ENCODE measurements at regions of chr4 and their contacts with region 1.

Region 1: DNA sequence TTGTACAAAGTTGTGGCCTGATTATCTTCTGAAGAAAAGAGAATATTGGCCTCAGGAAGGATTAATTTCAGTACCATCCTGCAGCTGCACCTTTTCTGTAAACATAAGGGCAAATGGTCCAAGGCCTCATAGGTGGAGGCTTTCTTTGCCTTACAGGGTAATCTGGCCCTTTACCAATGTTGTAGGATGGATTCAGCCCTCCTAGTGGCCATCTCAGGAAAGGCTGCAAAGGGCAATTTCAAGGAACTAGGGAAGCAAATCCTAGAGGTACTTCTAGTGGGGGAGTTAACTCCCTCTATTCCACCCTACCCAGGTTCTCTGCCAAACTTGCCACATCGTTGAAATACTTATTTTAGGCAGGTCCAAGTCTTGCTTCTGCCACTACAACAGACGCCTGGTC is 57.6 kb downstream of the UGT2B11 start:
- DNase-seq: no peak

Region 2: GRCh38 chr4:68773699-68774098 is 383.2 kb before region 1 on chr4:
- intact Hi-C with region 1: loop called in 1 of 2 experiments (anchors 5 kb)
- DNase-seq: no peak

Measured in posterior vena cava (tissue), 2 donors.